H1 (cell line): ENCODE measurements at regions of chr1 and their contacts with region 1.

Region 1: GRCh38 chr1:18913065-18913835 is 10.9 kb upstream of the ALDH4A1 start:
- DNase-seq: peak; percentile 70 to 96
- H3K4me3 ChIP-seq: no peak overlapping the region
- H3K27ac ChIP-seq: no peak overlapping the region
- H3K4me1 ChIP-seq: no peaks in the 10 kb centered on the region; a peak in 1 of 7 replicates
- H3K27me3 ChIP-seq: no peaks in the 10 kb centered on the region
- CTCF ChIP-seq: peak; percentile 97 to 100 (median 100)
- EP300 ChIP-seq: no peak
- POLR2A ChIP-seq: no peak
- RAD21 ChIP-seq: peak; percentile 88 to 92

Region 2: DNA sequence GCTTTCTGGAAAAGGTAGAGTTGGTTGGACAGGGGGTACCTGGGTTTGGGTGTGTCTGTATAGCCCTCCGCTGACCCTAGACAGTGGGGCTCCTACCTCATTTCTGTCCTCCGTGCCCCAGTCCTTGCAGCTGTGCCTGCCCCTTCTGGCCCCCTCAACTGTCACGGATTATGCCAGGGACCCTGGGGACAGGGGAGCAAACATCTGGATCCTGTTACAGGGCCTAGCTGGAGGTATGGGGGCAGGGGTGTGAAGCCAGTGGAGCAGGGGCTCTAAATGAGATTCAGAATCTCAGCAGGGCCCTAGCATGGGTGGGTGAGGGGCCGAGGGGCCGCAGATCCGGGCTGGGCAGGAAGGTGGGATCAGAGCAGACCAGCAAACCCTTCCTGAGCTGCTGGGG is 134.8 kb before region 1 on chr1:
- CTCF ChIA-PET with region 1: no interaction called
- POLR2A ChIA-PET with region 1: no interaction called
- DNase-seq: no peak
- H3K4me3 ChIP-seq: no peak overlapping the region
- H3K27ac ChIP-seq: no peak overlapping the region
- H3K4me1 ChIP-seq: peaks cover 0 to 5% (median 4%) of the 10 kb centered on the region in 4 experiments; a peak in 5 of 7 replicates
- H3K27me3 ChIP-seq: no peaks in the 10 kb centered on the region; a peak in 4 of 7 replicates
- CTCF ChIP-seq: no peak
- EP300 ChIP-seq: no peak
- POLR2A ChIP-seq: no peak
- RAD21 ChIP-seq: no peak

Region 3: DNA sequence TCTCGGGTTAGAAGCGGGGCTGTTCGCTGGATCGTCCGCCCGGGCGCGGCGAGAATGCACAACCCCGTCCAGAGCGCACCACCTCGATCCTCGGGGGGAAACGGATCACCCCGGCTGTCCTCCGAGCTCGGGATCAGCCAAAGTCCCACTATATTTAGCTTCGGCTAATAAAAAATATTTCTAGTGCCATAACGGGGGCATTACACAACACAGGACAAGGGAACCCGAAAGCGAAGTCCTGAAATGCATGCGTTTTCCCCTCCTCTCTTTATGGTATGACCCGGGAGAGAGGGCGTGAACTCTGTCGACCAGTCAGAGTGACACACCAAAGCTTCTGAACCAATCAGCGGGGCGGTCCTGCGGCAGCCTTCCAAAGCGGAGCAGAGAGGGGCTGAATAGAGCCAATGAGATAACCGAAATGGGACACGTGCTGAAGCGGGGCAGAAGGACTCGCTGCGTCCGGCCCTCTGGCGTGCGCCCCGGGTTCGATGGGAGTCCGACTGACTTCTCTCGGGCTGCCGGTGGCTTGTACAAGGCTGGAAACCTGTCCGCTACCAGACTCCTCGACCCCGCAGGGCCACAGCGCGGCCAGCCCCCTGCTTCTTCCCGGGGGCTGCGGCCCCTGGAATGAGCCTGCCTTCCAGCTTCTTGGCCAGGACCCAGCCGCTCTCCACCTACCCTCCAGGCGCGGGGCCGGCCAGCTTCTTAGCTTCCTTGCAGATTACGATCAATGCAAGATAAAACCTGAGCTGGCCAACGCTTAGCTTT is 10.5 kb before region 1 on chr1 and contains the start of gene ALDH4A1:
- CTCF ChIA-PET with region 1: interaction called, 46 read pairs
- POLR2A ChIA-PET with region 1: interaction called, 11 read pairs
- DNase-seq: peak; percentile 87 to 88
- H3K4me3 ChIP-seq: peak within 1 kb of the TSS; percentile 91 to 96 (median 93)
- H3K27ac ChIP-seq: peak within 1 kb of the TSS; percentile 99
- H3K4me1 ChIP-seq: peaks cover 0 to 5% (median 2%) of the 10 kb centered on the region in 4 experiments; a peak in 5 of 7 replicates
- H3K27me3 ChIP-seq: peaks cover 0 to 3% (median 0%) of the 10 kb centered on the region in 4 experiments; a peak in 4 of 7 replicates
- CTCF ChIP-seq: no peak
- EP300 ChIP-seq: peak in 1 of 2 experiments; percentile 99; a peak in 2 of 3 replicates
- POLR2A ChIP-seq: peak in 1 of 2 experiments; percentile 84; a peak in 2 of 3 replicates
- RAD21 ChIP-seq: no peak
- total RNA-seq, gene ALDH4A1: 29.4 and 30.3 TPM in 2 replicates

Region 4: DNA sequence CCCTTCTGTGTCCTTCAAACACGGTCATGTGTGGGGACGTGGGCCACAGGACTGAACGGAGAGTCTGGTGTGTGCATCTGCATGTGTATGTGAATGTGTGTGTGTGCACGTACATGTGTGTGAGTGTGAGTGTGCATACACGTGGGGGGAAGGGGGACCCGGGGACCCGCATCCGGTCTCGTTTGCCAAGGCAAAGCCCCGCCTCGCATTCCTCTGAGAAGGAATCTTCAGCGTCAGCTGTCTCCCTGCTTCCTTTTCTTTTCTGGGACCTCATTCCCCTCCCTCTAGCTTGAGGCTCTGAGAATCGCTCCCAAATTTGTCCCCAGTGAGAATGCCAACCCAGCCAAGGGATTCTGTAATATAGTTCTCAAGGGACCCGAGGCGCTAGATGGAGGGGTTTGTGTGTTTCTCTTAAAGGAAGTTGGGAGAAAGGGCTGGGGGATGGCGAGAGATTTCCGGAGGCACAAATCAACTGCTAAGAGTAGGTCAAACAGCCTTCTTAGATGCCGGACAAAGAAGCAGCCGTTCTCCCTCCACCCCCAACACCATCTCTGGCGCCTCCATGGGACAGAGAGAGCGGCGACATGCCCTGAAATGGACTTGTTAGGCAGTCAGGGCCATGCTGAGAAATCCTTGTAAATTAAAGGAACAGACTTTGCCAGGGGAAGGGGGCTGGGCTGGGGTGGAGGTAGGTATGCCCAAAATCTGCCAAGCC is 36.6 kb after region 1 on chr1:
- CTCF ChIA-PET with region 1: interaction called, 105 read pairs
- POLR2A ChIA-PET with region 1: interaction called, 11 read pairs
- DNase-seq: no peak
- H3K4me3 ChIP-seq: peak overlapping the region in 2 of 4 experiments; percentile 8 to 34; a peak in 3 of 8 replicates
- H3K27ac ChIP-seq: peak overlapping the region; percentile 30; the same call in 1 of the 2 replicates
- H3K4me1 ChIP-seq: peaks cover 16 to 24% (median 19%) of the 10 kb centered on the region in 4 experiments
- H3K27me3 ChIP-seq: peaks cover 0 to 13% (median 8%) of the 10 kb centered on the region in 4 experiments; a peak in 5 of 7 replicates
- CTCF ChIP-seq: peak; percentile 2 to 25 (median 22); a peak in 2 of 4 replicates
- EP300 ChIP-seq: no peak
- POLR2A ChIP-seq: peak in 1 of 2 experiments; percentile 59; a peak in 2 of 3 replicates
- RAD21 ChIP-seq: peak in 1 of 2 experiments; percentile 21; a peak in 1 of 4 replicates

Region 5: DNA sequence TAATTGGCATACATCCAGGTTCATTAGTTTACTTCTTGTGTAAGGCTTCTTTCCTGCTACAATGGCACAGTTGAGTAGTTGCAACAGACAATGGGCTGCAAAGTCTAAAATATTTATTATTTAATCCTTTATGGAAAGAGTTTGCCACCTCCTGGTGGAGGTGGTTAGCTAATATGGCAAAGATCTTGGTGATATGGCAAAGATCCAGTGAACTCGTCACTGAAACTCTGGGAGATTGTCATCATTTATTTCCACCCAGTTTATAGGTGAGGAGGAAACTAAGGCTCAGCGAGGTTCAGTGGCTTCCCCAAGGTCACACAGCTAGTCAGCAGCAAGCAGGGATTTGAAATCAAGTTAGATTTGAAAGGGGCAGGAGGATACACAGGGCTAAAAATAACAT is 59.3 kb after region 1 on chr1:
- CTCF ChIA-PET with region 1: interaction called, 23 read pairs
- POLR2A ChIA-PET with region 1: interaction called, 3 read pairs
- DNase-seq: no peak
- H3K4me3 ChIP-seq: no peak overlapping the region
- H3K27ac ChIP-seq: no peak overlapping the region
- H3K4me1 ChIP-seq: no peaks in the 10 kb centered on the region
- H3K27me3 ChIP-seq: no peaks in the 10 kb centered on the region
- CTCF ChIP-seq: 0 out of 4 replicates have a peak, but pooled peaks of 1 of the 3 experiments have one; percentile 21
- EP300 ChIP-seq: no peak
- POLR2A ChIP-seq: no peak
- RAD21 ChIP-seq: peak in 1 of 2 experiments; percentile 22; a peak in 2 of 4 replicates

Region 6: DNA sequence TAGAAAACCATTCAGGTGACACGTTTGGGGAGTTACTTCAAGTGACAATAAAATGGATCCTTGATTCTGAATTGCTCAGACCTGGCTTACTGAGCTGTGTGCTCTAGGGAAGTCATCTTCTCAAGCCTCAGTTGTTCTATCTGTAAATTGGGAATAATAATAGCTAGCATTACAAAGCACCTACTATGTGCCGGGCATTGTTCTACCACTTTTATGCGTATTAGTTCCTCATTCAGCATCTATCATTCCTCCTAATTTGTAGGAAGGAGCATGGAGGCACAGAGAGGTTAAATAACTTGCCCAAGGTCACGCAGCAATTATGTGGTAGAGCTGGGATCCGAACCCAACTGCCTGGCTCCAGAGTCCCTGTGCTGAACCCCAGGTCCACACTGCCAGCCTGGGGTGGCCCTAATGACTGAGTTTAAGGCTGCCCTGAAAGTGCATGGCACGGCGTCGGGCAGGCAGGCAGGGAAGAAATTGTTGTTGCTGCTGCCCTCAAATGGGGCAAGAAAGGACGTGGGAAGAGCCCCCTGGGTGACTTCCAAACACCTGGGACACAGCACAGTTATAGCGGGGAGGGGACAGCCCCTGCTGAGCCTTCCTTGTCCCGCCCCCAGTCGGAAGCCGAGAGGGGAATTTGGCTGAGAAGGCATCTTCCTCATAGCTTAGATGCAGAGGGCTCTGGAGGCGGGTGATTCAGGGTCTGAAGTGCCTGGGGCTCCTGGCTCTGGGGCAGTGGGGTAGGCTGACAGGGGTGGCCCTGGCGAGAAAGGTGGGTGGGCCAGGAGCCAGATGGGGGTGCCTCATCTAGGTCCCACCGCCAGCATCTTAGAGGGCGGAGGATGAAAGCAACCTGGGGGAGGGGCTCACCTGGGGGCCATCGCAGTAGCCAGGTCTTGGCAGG is 129.7 kb after region 1 on chr1:
- CTCF ChIA-PET with region 1: interaction called, 23 read pairs
- POLR2A ChIA-PET with region 1: no interaction called
- DNase-seq: no peak
- H3K4me3 ChIP-seq: no peak overlapping the region; a peak in 1 of 8 replicates
- H3K27ac ChIP-seq: no peak overlapping the region
- H3K4me1 ChIP-seq: peaks cover 0 to 3% (median 1%) of the 10 kb centered on the region in 4 experiments; a peak in 3 of 7 replicates
- H3K27me3 ChIP-seq: 0 out of 7 replicates have a peak, but pooled peaks cover 0 to 2% (median 0%) of the 10 kb centered on the region in 4 experiments
- CTCF ChIP-seq: no peak
- EP300 ChIP-seq: no peak
- POLR2A ChIP-seq: no peak
- RAD21 ChIP-seq: no peak

Region 7: GRCh38 chr1:19074902-19075721 is 161.9 kb after region 1 on chr1:
- CTCF ChIA-PET with region 1: interaction called, 59 read pairs
- POLR2A ChIA-PET with region 1: interaction called, 3 read pairs
- DNase-seq: no peak
- H3K4me3 ChIP-seq: no peak overlapping the region
- H3K27ac ChIP-seq: no peak overlapping the region
- H3K4me1 ChIP-seq: peaks cover 0 to 6% (median 2%) of the 10 kb centered on the region in 4 experiments; a peak in 4 of 7 replicates
- H3K27me3 ChIP-seq: no peaks in the 10 kb centered on the region
- CTCF ChIP-seq: no peak
- EP300 ChIP-seq: no peak
- POLR2A ChIP-seq: no peak
- RAD21 ChIP-seq: no peak

Region 8: GRCh38 chr1:19186001-19186400 is 272.8 kb after region 1 on chr1:
- CTCF ChIA-PET with region 1: no interaction called
- POLR2A ChIA-PET with region 1: no interaction called
- DNase-seq: no peak
- H3K4me3 ChIP-seq: no peak overlapping the region
- H3K27ac ChIP-seq: no peak overlapping the region
- H3K4me1 ChIP-seq: peaks cover 0 to 2% (median 0%) of the 10 kb centered on the region in 4 experiments; a peak in 1 of 7 replicates
- H3K27me3 ChIP-seq: no peaks in the 10 kb centered on the region
- CTCF ChIP-seq: no peak
- EP300 ChIP-seq: no peak
- POLR2A ChIP-seq: no peak
- RAD21 ChIP-seq: no peak